K562 (cell line): ENCODE measurements at regions of chr7 and their contacts with region 1.

Region 1: DNA sequence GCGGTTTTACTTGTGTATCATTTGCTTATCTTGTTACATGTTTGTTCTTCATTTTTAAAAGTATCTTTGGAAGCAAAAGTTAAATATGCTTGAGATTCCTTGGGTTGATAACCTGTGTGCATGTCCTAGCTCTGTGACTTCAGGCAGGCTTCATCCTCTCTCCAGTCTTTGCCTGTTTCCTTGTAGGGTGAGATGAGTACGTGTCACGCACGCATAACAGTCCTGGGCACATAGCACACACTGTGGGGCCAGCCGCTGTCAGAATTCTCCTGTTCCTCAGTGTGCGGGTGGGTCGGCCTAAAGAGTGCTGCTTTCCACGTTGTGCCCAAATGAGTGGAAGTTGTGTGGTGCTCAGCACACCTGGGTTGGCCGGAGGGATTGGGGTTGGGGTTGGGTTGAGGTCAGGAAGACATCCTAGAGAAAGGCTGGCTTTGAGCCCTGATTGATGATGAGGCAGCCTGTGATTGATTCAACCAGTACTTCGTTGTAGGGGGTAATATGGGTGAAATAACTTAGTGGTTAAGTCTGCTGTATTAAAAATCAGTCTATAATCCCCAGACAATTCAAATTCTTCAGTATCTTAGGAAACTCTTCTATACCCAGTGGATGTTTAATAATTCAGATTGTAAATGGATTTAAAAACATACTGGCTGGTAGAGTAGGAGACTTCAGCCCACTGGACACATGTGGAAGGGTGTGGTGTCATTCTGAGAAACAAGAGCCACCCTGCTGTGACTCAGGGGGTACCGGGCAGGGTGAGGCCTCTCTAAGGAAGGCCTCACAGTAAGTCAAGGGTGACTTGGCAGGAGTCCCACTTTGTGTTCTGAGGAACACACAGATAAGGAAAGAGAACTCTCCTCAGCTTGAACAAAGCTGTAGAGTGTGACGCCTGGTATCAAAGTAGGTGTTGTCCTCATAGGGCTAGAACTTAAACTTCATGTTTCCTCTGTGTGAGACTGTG is 54.8 kb downstream of the DAGLB start:
- DNase-seq: peak; percentile 72 to 99 (median 84)
- ATAC-seq: peak; percentile 96
- H3K4me3 ChIP-seq: no peak overlapping the region; the same call in 1 of the 2 replicates
- H3K27ac ChIP-seq: peak overlapping the region; percentile 73
- H3K4me1 ChIP-seq: peaks cover 33 to 42% of the 10 kb centered on the region in 2 experiments
- H3K27me3 ChIP-seq: no peaks in the 10 kb centered on the region
- CTCF ChIP-seq: no peak; a peak in 1 of 6 replicates
- EP300 ChIP-seq: peak; percentile 81
- POLR2A ChIP-seq: no peak; the same call in 1 of the 2 replicates
- RAD21 ChIP-seq: peak in 1 of 2 experiments; percentile 34; a peak in 2 of 4 replicates

Region 2: DNA sequence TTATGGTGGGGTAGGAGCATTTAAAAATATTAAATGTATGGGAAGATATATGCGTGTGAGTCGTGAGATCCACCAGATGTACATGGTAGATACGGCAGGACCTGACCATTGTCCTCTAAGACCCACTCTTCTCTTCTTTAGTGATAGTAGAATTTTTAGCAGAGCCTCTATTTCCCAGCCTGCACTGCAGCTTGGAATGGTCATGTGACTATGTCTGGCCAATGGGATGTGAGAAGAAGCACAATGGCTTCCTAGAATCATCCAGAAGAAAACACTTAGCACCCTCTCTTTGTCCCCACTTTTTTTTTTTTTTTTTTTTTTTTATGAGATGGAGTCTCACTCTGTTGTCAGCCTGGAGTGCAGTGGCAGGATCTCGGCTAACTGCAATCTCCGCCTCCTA is 34.0 kb before region 1 on chr7:
- CTCF ChIA-PET with region 1: no interaction called
- POLR2A ChIA-PET with region 1: no interaction called
- in situ Hi-C with region 1: no loop called
- intact Hi-C with region 1: loop called (anchors 5 kb)
- DNase-seq: peak; percentile 65 to 75 (median 68)
- ATAC-seq: peak; percentile 90
- H3K4me3 ChIP-seq: no peak overlapping the region
- H3K27ac ChIP-seq: no peak overlapping the region
- H3K4me1 ChIP-seq: peaks cover 0 to 2% of the 10 kb centered on the region in 2 experiments; a peak in 3 of 5 replicates
- H3K27me3 ChIP-seq: no peaks in the 10 kb centered on the region
- CTCF ChIP-seq: no peak
- EP300 ChIP-seq: no peak
- POLR2A ChIP-seq: no peak
- RAD21 ChIP-seq: no peak

Region 3: GRCh38 chr7:6382817-6383216 is 10.2 kb before region 1 on chr7:
- CTCF ChIA-PET with region 1: no interaction called
- POLR2A ChIA-PET with region 1: interaction called, 30 read pairs
- in situ Hi-C with region 1: no loop called
- intact Hi-C with region 1: no loop called
- DNase-seq: no peak
- ATAC-seq: peak; percentile 11; the same call in 1 of the 3 replicates
- H3K4me3 ChIP-seq: no peak overlapping the region
- H3K27ac ChIP-seq: peak overlapping the region; percentile 9; the same call in 1 of the 3 replicates
- H3K4me1 ChIP-seq: peaks cover 28 to 45% of the 10 kb centered on the region in 2 experiments
- H3K27me3 ChIP-seq: no peaks in the 10 kb centered on the region
- CTCF ChIP-seq: no peak
- EP300 ChIP-seq: no peak
- POLR2A ChIP-seq: no peak
- RAD21 ChIP-seq: no peak